H1 (cell line): ENCODE measurements at regions of chr3 and their contacts with region 1.

Region 1: GRCh38 chr3:113287803-113288648 is 76.7 kb downstream of the BOC start:
- DNase-seq: peak in 1 of 2 experiments; percentile 83
- H3K4me3 ChIP-seq: no peak overlapping the region
- H3K27ac ChIP-seq: no peak overlapping the region
- H3K4me1 ChIP-seq: 0 out of 7 replicates have a peak, but pooled peaks cover 0 to 2% (median 0%) of the 10 kb centered on the region in 4 experiments
- H3K27me3 ChIP-seq: no peaks in the 10 kb centered on the region
- CTCF ChIP-seq: peak in 2 of 3 experiments; percentile 92 to 95; a peak in 3 of 4 replicates
- EP300 ChIP-seq: no peak
- POLR2A ChIP-seq: no peak
- RAD21 ChIP-seq: peak; percentile 98 to 99

Region 2: DNA sequence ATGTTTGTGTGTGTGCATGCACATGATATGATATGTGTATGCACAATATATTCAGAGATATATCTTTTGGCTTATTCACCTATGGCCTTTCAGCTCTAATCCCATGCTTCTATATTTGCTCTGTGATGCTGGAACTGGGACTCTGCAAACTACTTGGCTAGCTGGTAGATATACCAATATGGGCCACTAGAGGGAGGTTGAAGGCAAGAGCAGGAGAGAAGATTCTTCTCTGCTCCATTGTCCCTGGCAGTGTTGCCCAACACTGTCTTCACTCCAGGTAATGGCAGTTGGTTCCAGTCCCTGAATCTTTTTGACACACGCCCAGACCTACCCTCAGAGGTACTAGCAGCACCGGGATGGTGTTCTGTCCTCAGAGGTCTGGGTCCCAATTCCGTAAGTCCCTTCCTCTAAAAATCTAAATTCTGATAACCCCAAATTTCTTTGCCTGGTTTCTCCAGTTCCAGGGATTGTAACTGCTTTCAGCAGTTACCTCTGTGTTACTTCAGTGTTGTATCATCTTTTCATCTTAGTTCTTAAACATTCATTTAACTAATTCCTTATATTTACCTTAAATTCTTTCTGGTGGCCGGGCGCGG is 252.5 kb before region 1 on chr3:
- CTCF ChIA-PET with region 1: interaction called, 29 read pairs
- POLR2A ChIA-PET with region 1: no interaction called
- DNase-seq: peak in 1 of 2 experiments; percentile 55
- H3K4me3 ChIP-seq: no peak overlapping the region
- H3K27ac ChIP-seq: no peak overlapping the region
- H3K4me1 ChIP-seq: no peaks in the 10 kb centered on the region
- H3K27me3 ChIP-seq: no peaks in the 10 kb centered on the region
- CTCF ChIP-seq: peak; percentile 33 to 91 (median 72)
- EP300 ChIP-seq: no peak
- POLR2A ChIP-seq: no peak
- RAD21 ChIP-seq: peak; percentile 73 to 80

Region 3: GRCh38 chr3:113084777-113085176 is 203.2 kb before region 1 on chr3:
- CTCF ChIA-PET with region 1: interaction called, 16 read pairs
- POLR2A ChIA-PET with region 1: no interaction called
- DNase-seq: no peak
- H3K4me3 ChIP-seq: no peak overlapping the region
- H3K27ac ChIP-seq: no peak overlapping the region
- H3K4me1 ChIP-seq: peaks cover 0 to 6% (median 4%) of the 10 kb centered on the region in 4 experiments; a peak in 3 of 7 replicates
- H3K27me3 ChIP-seq: no peaks in the 10 kb centered on the region
- CTCF ChIP-seq: no peak
- EP300 ChIP-seq: no peak
- POLR2A ChIP-seq: no peak
- RAD21 ChIP-seq: no peak

Region 4: GRCh38 chr3:113128386-113129015 is 159.5 kb before region 1 on chr3:
- CTCF ChIA-PET with region 1: interaction called, 65 read pairs
- POLR2A ChIA-PET with region 1: no interaction called
- DNase-seq: no peak
- H3K4me3 ChIP-seq: no peak overlapping the region
- H3K27ac ChIP-seq: no peak overlapping the region
- H3K4me1 ChIP-seq: no peaks in the 10 kb centered on the region
- H3K27me3 ChIP-seq: no peaks in the 10 kb centered on the region
- CTCF ChIP-seq: no peak
- EP300 ChIP-seq: no peak
- POLR2A ChIP-seq: no peak
- RAD21 ChIP-seq: no peak

Region 5: GRCh38 chr3:113218011-113218678 is 69.9 kb before region 1 on chr3:
- CTCF ChIA-PET with region 1: interaction called, 12 read pairs
- POLR2A ChIA-PET with region 1: no interaction called
- DNase-seq: no peak
- H3K4me3 ChIP-seq: no peak overlapping the region
- H3K27ac ChIP-seq: no peak overlapping the region
- H3K4me1 ChIP-seq: peaks cover 2 to 8% (median 5%) of the 10 kb centered on the region in 4 experiments; a peak in 5 of 7 replicates
- H3K27me3 ChIP-seq: peaks cover 0 to 11% (median 7%) of the 10 kb centered on the region in 4 experiments; a peak in 6 of 7 replicates
- CTCF ChIP-seq: no peak
- EP300 ChIP-seq: no peak
- POLR2A ChIP-seq: no peak
- RAD21 ChIP-seq: no peak

Region 6: GRCh38 chr3:113255100-113255853 is 32.7 kb before region 1 on chr3:
- CTCF ChIA-PET with region 1: interaction called, 15 read pairs
- POLR2A ChIA-PET with region 1: no interaction called
- DNase-seq: no peak
- H3K4me3 ChIP-seq: no peak overlapping the region
- H3K27ac ChIP-seq: no peak overlapping the region
- H3K4me1 ChIP-seq: peaks cover 0 to 5% (median 4%) of the 10 kb centered on the region in 4 experiments; a peak in 4 of 7 replicates
- H3K27me3 ChIP-seq: no peaks in the 10 kb centered on the region
- CTCF ChIP-seq: peak; percentile 44 to 47 (median 45)
- EP300 ChIP-seq: no peak
- POLR2A ChIP-seq: no peak
- RAD21 ChIP-seq: peak; percentile 19 to 49; a peak in 3 of 4 replicates

Region 7: GRCh38 chr3:113304856-113305540 is 17.0 kb after region 1 on chr3:
- CTCF ChIA-PET with region 1: interaction called, 39 read pairs
- POLR2A ChIA-PET with region 1: no interaction called
- DNase-seq: no peak
- H3K4me3 ChIP-seq: no peak overlapping the region
- H3K27ac ChIP-seq: no peak overlapping the region
- H3K4me1 ChIP-seq: peaks cover 0 to 3% (median 0%) of the 10 kb centered on the region in 4 experiments; a peak in 1 of 7 replicates
- H3K27me3 ChIP-seq: no peaks in the 10 kb centered on the region
- CTCF ChIP-seq: peak; percentile 39 to 61 (median 60); a peak in 3 of 4 replicates
- EP300 ChIP-seq: no peak
- POLR2A ChIP-seq: no peak
- RAD21 ChIP-seq: peak; percentile 35 to 56

Region 8: GRCh38 chr3:113468539-113468938 is 180.5 kb after region 1 on chr3:
- CTCF ChIA-PET with region 1: no interaction called
- POLR2A ChIA-PET with region 1: no interaction called
- DNase-seq: no peak
- H3K4me3 ChIP-seq: no peak overlapping the region
- H3K27ac ChIP-seq: no peak overlapping the region
- H3K4me1 ChIP-seq: no peaks in the 10 kb centered on the region
- H3K27me3 ChIP-seq: no peaks in the 10 kb centered on the region
- CTCF ChIP-seq: no peak
- EP300 ChIP-seq: no peak
- POLR2A ChIP-seq: no peak
- RAD21 ChIP-seq: no peak